ENCODE measurements at regions of chr5 and their contacts with region 1.

Region 1: DNA sequence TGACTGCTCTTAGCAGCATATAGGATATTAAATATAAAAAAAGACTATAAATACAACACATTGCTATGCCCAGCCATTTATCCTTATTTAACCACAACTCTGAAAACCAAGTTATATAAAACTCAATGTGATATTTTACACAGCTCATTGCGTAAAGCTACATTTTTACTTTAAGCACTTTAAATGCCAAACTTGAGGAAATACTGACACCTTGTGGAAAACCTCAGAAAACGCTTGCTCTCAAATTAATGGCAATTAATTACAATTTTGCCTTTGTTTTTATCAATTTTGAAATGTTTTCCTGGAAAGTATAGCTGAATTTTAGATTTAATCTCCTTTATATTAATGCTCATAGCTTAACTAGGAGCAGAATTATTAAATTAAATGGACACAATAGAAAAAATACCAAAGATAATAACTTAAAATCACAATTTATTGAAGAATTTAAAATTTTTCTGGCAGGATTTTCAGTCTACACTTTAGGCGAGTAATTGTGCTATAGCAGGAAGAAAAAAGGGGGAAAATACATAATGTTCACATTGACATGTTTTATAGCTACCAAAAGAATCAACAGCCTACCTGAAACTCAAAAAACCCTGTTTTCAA is 25.2 kb upstream of the PLAC8L1 start:
- DNase-seq: peak; percentile 6
- H3K4me3 ChIP-seq: no peak overlapping the region
- H3K27ac ChIP-seq: no peak overlapping the region
- H3K27me3 ChIP-seq: no peaks in the 10 kb centered on the region
- CTCF ChIP-seq: peak; percentile 60

Region 2: DNA sequence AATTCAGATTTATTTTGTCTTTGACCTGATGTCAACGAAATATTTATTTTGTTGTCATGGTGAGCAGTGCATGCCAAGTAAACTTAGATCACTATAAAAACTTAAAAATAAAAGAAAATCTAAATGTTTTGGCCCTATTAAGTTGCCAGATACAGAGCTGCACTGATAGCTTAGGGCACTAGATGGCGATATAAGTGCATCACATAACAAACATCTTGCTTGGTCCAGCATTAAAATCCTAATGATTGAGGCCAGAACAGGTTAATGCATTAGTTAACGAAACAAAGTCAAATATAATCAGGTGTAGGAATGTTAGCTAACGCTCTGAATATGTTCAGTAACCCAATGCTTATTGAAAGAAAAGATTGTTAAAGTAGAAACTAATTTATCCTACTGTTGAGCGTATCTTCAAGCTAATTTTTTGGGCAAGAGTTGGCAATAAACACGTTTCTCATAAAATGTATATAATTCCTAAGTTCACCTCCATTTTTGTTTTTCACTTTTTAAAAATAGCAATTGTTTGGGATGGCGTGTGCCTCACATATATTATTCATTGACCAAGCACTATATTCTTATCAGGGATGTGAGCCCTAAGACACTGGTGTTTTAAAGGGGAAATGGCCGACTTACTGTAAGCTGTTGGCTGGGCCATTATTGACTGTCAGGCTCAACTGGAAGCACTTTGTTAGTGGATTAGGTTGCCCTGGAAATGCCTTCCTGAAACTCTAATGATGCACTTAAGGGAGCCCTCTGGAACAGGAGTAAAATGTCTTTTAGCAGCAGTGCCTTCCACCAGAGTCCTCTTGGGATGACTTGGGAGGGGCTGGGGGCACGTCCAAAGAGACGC is 1926.6 kb before region 1 on chr5:
- CTCF ChIA-PET with region 1: interaction called, 21 read pairs
- POLR2A ChIA-PET with region 1: no interaction called
- DNase-seq: no peak
- H3K4me3 ChIP-seq: no peak overlapping the region
- H3K27ac ChIP-seq: no peak overlapping the region
- H3K27me3 ChIP-seq: peaks cover 10% of the 10 kb centered on the region
- CTCF ChIP-seq: peak; percentile 91

Region 3: GRCh38 chr5:145681686-145682085 is 448.9 kb before region 1 on chr5:
- CTCF ChIA-PET with region 1: interaction called, 15 read pairs
- POLR2A ChIA-PET with region 1: no interaction called
- DNase-seq: peak; percentile 20
- H3K4me3 ChIP-seq: no peak overlapping the region
- H3K27ac ChIP-seq: no peak overlapping the region
- H3K27me3 ChIP-seq: no peaks in the 10 kb centered on the region
- CTCF ChIP-seq: peak; percentile 85

Region 4: GRCh38 chr5:146016764-146017484 is 113.6 kb before region 1 on chr5:
- CTCF ChIA-PET with region 1: no interaction called
- POLR2A ChIA-PET with region 1: no interaction called
- DNase-seq: no peak
- H3K4me3 ChIP-seq: no peak overlapping the region
- H3K27ac ChIP-seq: no peak overlapping the region
- H3K27me3 ChIP-seq: no peaks in the 10 kb centered on the region
- CTCF ChIP-seq: no peak

Region 5: DNA sequence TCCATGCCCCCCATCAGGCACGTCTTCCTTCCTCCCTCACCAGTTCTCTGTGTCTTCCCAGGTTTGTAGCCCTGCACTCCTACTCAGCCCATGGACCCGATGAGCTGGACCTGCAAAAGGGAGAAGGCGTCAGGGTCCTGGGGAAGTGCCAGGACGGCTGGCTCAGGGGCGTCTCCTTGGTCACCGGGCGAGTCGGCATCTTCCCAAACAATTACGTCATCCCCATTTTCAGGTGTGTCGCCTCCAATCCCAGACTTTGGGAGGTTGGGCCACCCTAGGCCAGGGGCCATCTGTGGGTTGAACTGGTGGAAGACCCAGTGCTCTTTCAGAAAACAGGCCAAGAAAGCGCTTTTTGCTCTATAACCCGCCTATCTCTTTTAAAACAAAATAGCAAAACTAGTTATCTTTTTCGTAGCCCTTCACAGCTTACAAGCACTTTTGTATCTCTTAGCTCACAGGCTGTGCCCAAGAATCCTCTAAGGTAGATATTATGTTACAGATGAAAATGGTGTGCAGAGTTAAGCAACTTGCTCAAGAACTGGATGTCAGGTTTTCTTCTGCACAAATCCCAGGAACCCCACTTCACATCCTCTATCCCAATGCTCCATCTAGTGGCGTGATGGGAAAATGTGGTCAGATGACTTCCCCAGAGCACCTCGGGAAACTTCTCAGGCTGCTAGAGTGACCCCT is 81.4 kb before region 1 on chr5:
- CTCF ChIA-PET with region 1: interaction called, 12 read pairs
- POLR2A ChIA-PET with region 1: no interaction called
- DNase-seq: peak; percentile 65
- H3K4me3 ChIP-seq: no peak overlapping the region
- H3K27ac ChIP-seq: no peak overlapping the region
- H3K27me3 ChIP-seq: no peaks in the 10 kb centered on the region
- CTCF ChIP-seq: peak; percentile 86

Region 6: GRCh38 chr5:146118322-146118721 is 12.2 kb before region 1 on chr5:
- CTCF ChIA-PET with region 1: interaction called, 24 read pairs
- POLR2A ChIA-PET with region 1: no interaction called
- DNase-seq: no peak
- H3K4me3 ChIP-seq: no peak overlapping the region
- H3K27ac ChIP-seq: no peak overlapping the region
- H3K27me3 ChIP-seq: no peaks in the 10 kb centered on the region
- CTCF ChIP-seq: no peak

Region 7: DNA sequence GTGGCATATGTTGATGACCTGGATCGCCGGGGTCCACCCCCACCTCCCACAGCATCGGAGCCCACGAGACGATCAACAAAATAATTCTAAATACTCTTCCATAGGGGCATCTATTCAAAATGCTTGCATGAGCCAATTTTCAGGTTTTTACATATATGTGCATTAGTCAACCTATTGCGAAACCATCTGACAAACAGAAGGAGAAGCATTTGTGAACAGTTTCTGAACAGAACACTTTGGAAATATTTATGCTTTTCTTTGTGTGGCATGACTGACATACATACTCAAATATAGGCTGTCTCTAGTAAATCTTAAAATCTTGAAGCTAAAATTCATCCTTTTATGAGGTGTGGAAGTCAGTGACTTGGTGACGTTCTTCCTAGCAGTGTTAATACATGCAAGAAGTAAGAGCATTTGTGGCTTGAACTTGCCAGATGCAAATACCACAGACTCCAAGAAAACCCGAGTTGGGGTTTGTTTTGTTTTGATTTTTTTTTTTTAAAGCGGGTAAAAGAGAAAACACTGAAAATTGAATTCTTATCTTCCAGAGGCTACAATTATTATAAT is 380.1 kb after region 1 on chr5:
- CTCF ChIA-PET with region 1: interaction called, 14 read pairs
- POLR2A ChIA-PET with region 1: no interaction called
- DNase-seq: no peak
- H3K4me3 ChIP-seq: no peak overlapping the region
- H3K27ac ChIP-seq: no peak overlapping the region
- H3K27me3 ChIP-seq: no peaks in the 10 kb centered on the region
- CTCF ChIP-seq: no peak

Measured in AG04450 (cell line).